Heart left ventricle (tissue), 16 donors: ENCODE measurements at regions of chr20 and their contacts with region 1.

Region 1: DNA sequence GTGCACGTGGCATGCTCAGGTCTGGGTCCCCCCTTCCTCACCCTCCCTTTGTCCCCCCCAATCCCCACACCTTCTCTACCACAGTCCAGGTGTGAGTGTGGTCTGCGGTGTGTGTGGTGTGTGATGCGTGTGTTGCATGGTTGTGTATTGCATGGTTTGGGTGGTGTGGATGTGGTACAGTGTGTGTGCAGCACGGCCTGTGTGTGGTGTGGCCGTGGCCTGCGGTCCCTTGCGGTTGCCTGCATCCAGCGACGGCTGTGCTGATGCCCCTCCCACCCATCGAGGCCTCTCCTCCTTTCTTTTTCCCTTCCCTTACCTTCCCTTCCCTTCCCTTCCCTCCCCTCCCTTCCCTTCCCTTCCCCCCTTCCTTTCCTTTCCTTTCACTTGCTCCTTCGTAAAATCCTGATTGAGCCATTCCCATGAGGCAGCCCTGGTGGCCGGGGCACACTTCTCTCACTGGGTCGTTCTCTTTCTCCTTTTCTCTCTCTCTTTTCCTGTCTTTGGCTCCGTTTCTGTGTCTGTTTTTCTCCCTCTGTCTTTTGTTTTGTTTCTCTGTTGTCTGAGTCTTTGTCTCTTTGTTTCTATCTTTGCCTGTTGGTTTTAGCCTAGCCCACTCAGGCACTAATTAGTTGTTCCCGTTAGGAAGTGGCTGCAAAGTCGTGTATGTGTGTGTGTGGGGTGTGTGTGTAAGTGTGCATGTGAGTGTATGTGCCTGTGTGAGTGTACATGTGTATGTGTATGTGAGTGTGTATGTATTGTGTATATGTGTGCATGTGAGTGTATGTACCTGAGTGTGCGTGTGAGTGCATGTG is 65.7 kb downstream of the SRC start:
- DNase-seq: peak in 1 of 5 donors; percentile 13
- ATAC-seq: no peak
- H3K4me3 ChIP-seq: peak overlapping the region in 6 of 12 donors; percentile 32 to 55 (median 47)
- H3K27ac ChIP-seq: no peak overlapping the region
- H3K4me1 ChIP-seq: peaks cover 0 to 23% (median 11%) of the 10 kb centered on the region in 12 donors
- H3K27me3 ChIP-seq: peaks cover 0 to 55% (median 13%) of the 10 kb centered on the region in 9 donors
- CTCF ChIP-seq: no peak
- POLR2A ChIP-seq: no peak

Region 2: GRCh38 chr20:37378785-37379598 is 32.6 kb before region 1 on chr20:
- intact Hi-C with region 1: no loop called
- DNase-seq: peak in 1 of 5 donors; percentile 30
- ATAC-seq: peak in 1 of 4 donors; percentile 37
- H3K4me3 ChIP-seq: no peak overlapping the region
- H3K27ac ChIP-seq: no peak overlapping the region
- H3K4me1 ChIP-seq: peaks cover 0 to 31% (median 0%) of the 10 kb centered on the region in 12 donors
- H3K27me3 ChIP-seq: no peaks in the 10 kb centered on the region
- CTCF ChIP-seq: no peak
- POLR2A ChIP-seq: no peak

Region 3: DNA sequence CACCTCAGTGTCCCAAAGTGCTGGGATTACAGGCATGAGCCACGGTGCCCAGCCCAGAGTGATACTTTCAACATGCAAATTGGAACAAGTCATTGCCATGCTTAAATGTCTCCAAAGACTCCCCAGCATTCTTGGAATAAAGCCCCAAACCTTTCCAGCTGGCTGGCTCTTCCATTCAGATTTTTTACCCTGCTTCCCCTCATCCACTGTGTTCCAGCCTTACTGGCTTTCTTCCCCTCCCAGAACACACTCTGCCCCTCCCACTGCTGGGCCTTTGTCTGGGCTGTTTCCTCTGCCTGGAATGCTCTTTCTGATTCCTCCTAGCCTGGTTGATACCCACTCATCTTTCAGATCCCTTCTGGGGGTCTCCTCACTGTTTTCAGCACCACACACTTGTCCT is 69.3 kb after region 1 on chr20:
- intact Hi-C with region 1: loop called in 1 of 10 experiments (anchors 10 kb)
- DNase-seq: no peak
- ATAC-seq: no peak
- H3K4me3 ChIP-seq: no peak overlapping the region
- H3K27ac ChIP-seq: no peak overlapping the region
- H3K4me1 ChIP-seq: no peaks in the 10 kb centered on the region
- H3K27me3 ChIP-seq: peaks cover 0 to 3% (median 0%) of the 10 kb centered on the region in 9 donors
- CTCF ChIP-seq: no peak
- POLR2A ChIP-seq: no peak